ENCODE measurements at regions of chr5 and their contacts with region 1.

Region 1: DNA sequence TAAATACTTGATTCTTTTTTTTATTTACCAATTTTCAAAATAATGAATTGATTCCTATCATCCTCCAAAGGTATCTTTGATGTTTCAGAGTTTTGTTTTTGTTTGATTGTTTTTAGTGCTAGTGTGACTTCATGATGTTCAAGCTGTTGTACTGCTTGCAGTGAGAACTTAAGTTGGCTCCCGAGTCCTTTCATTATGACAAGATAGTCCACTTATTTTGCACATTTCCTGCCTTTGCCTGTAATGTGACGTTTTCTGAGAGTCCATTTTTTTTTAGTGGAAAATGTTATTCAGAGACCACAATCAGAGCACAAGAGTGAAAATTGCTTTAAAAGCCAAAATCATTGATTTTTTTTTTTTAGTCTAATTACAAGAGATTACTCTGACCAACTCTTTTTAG is 60.1 kb upstream of the FCHO2 start:
- DNase-seq: no peak
- ATAC-seq: peak; percentile 95
- H3K4me3 Mint-ChIP-seq: no peak overlapping the region
- H3K27ac Mint-ChIP-seq: peak overlapping the region; percentile 53
- H3K4me1 Mint-ChIP-seq: peaks cover 10% of the 10 kb centered on the region
- H3K27me3 Mint-ChIP-seq: no peaks in the 10 kb centered on the region

Region 2: DNA sequence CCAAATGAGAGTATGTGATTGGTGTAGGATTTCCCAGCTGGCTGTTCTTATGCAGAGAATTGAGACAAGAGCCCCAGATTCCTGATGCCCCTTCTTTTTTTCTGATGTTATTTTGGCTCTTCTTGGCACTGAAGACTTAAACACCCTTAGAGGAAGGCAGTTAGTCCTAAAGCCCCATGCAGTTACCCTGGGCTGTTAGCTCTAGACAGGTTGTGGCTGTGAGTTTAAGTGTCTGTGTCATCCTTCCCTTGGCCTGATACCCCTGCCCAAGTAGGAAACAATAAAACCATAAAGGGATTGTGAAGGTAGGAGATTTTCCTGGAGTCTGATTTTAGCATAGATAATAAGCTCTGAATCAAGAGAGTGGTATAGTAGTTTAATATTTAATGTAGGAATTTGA is 66.1 kb before region 1 on chr5:
- CTCF ChIA-PET with region 1: no interaction called
- POLR2A ChIA-PET with region 1: no interaction called
- intact Hi-C with region 1: no loop called
- DNase-seq: no peak
- ATAC-seq: no peak
- H3K4me3 Mint-ChIP-seq: no peak overlapping the region
- H3K27ac Mint-ChIP-seq: no peak overlapping the region
- H3K4me1 Mint-ChIP-seq: no peaks in the 10 kb centered on the region
- H3K27me3 Mint-ChIP-seq: no peaks in the 10 kb centered on the region

Region 3: DNA sequence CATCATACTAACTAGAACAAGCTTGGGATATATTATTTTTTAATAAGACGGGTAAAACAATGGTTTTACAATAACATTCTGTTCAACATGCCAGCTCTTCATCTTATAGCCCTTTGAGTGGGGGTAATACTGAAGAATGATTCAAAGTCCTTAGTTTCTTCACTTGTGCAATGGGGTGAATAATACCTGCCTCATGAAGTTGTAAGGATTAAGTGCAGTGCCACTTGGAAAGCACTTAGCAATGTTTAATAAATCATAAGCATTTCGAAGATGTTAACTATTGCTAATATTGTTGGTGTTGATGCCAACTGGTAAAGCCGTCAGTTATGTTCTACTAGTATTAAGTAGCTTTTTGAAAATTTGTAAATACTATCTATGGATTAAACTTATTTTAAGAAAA is 41.3 kb before region 1 on chr5:
- CTCF ChIA-PET with region 1: no interaction called
- POLR2A ChIA-PET with region 1: no interaction called
- intact Hi-C with region 1: loop called in 1 of 2 experiments (anchors 5 kb)
- DNase-seq: no peak
- ATAC-seq: no peak
- H3K4me3 Mint-ChIP-seq: no peak overlapping the region
- H3K27ac Mint-ChIP-seq: no peak overlapping the region
- H3K4me1 Mint-ChIP-seq: peaks cover 58% of the 10 kb centered on the region
- H3K27me3 Mint-ChIP-seq: no peaks in the 10 kb centered on the region

Region 4: GRCh38 chr5:72860499-72860898 is 35.3 kb before region 1 on chr5:
- CTCF ChIA-PET with region 1: no interaction called
- POLR2A ChIA-PET with region 1: interaction called, 3 read pairs
- intact Hi-C with region 1: loop called in 1 of 2 experiments (anchors 5 kb)
- DNase-seq: no peak
- ATAC-seq: no peak
- H3K4me3 Mint-ChIP-seq: no peak overlapping the region
- H3K27ac Mint-ChIP-seq: no peak overlapping the region
- H3K4me1 Mint-ChIP-seq: peaks cover 29% of the 10 kb centered on the region
- H3K27me3 Mint-ChIP-seq: no peaks in the 10 kb centered on the region

Region 5: DNA sequence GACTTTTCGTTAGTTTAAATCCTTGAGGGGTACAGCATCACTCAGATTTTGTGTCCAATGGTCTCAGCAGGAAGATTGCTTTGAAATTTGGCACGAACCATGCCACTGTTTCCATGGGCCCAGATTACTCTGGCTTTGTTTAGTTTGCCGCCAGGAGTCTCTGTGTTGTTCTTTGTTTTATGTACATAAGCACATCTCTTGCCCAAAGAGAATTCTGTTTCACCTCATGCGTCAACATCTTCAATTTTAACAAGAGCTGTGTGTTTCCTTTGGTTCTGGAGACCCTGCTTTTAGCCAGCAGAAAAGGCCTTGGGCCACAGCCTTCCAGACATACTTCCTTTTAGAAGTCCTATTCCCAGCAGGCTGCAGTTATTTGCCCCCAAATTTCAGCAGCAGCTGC is 16.9 kb before region 1 on chr5:
- CTCF ChIA-PET with region 1: no interaction called
- POLR2A ChIA-PET with region 1: no interaction called
- intact Hi-C with region 1: no loop called
- DNase-seq: no peak
- ATAC-seq: no peak
- H3K4me3 Mint-ChIP-seq: no peak overlapping the region
- H3K27ac Mint-ChIP-seq: no peak overlapping the region
- H3K4me1 Mint-ChIP-seq: peaks cover 7% of the 10 kb centered on the region
- H3K27me3 Mint-ChIP-seq: no peaks in the 10 kb centered on the region

Region 6: DNA sequence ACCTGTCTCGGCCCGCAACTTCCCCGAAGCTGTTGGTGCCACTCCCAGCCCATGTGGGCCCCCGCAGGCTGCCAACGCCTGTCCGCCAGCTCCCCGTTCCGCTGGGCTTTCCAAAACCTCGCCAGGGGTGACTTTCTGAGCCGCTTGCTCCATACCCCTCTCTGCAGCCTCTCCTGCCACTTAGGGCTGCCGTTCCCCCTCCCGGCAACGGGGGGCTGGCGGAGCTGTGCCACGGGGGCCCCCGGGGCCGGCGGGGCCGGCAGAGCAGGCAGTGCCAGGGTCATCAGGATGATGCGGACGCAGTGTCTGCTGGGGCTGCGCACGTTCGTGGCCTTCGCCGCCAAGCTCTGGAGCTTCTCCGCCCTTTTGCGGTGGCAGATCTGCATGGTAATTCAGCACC is 100.9 kb after region 1 on chr5:
- CTCF ChIA-PET with region 1: no interaction called
- POLR2A ChIA-PET with region 1: no interaction called
- intact Hi-C with region 1: no loop called
- DNase-seq: no peak
- ATAC-seq: no peak
- H3K4me3 Mint-ChIP-seq: no peak overlapping the region
- H3K27ac Mint-ChIP-seq: no peak overlapping the region
- H3K4me1 Mint-ChIP-seq: no peaks in the 10 kb centered on the region
- H3K27me3 Mint-ChIP-seq: peaks cover 10% of the 10 kb centered on the region